GM12878 (cell line): ENCODE measurements at regions of chr21 and their contacts with region 1.

Region 1: GRCh38 chr21:36630485-36631206 is 68.3 kb upstream of the SIM2 start:
- DNase-seq: no peak
- ATAC-seq: peak; percentile 89
- H3K4me3 ChIP-seq: no peak overlapping the region
- H3K27ac ChIP-seq: no peak overlapping the region
- H3K4me1 ChIP-seq: no peaks in the 10 kb centered on the region
- H3K27me3 ChIP-seq: no peaks in the 10 kb centered on the region
- CTCF ChIP-seq: peak; percentile 59 to 78 (median 70)
- EP300 ChIP-seq: no peak
- POLR2A ChIP-seq: no peak
- RAD21 ChIP-seq: peak; percentile 61

Region 2: GRCh38 chr21:36589355-36589971 is 41.2 kb before region 1 on chr21:
- CTCF ChIA-PET with region 1: interaction called, 10 read pairs
- POLR2A ChIA-PET with region 1: no interaction called
- RAD21 ChIA-PET with region 1: no interaction called
- SMC1A ChIA-PET with region 1: interaction called, 3 read pairs
- in situ Hi-C with region 1: no loop called
- intact Hi-C with region 1: no loop called
- DNase-seq: peak; percentile 16
- ATAC-seq: peak; percentile 99
- H3K4me3 ChIP-seq: no peak overlapping the region
- H3K27ac ChIP-seq: no peak overlapping the region
- H3K4me1 ChIP-seq: no peaks in the 10 kb centered on the region; the same call in 1 of the 2 replicates
- H3K27me3 ChIP-seq: no peaks in the 10 kb centered on the region
- CTCF ChIP-seq: peak; percentile 66 to 69 (median 67)
- EP300 ChIP-seq: no peak
- POLR2A ChIP-seq: no peak
- RAD21 ChIP-seq: peak; percentile 77

Region 3: DNA sequence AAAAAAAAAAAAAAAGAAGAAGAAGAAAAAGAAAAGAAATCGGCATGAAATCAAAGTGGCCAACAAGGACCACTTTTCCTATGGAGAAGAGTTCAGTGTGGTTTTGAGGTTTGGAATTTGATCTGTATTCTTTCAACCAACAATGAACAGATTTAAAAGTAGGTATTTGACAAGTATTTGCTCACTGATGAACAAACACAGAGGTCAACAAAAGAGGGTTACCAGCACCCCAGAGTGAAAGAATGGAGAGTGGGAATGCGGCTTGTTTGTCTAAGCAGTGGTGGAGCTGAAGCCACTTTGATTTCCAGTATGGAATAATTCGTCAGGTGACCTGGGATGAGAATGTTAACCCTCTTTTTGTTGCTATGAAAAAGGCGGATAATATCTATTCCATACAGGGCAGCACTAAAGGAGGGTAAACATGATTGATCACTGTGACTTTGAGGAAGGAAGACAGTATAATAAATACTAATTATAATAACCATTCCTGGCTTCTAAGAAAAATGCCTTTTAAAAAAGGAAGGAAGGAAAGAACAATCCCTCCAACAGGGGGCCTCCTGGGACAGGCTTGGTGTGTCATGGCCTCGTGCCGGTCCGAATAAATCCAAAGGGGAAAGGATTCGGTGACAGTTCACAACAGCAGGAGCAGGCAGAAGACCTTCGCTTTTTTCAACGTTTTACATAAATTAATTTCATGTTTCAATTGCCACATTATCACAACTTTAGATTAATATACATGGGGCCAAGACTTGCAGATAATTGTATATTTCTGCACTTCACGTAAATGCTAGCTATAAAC is 31.1 kb after region 1 on chr21:
- CTCF ChIA-PET with region 1: interaction called, 13 read pairs
- POLR2A ChIA-PET with region 1: no interaction called
- RAD21 ChIA-PET with region 1: no interaction called
- SMC1A ChIA-PET with region 1: no interaction called
- in situ Hi-C with region 1: no loop called
- intact Hi-C with region 1: no loop called
- DNase-seq: no peak
- ATAC-seq: no peak
- H3K4me3 ChIP-seq: no peak overlapping the region
- H3K27ac ChIP-seq: no peak overlapping the region
- H3K4me1 ChIP-seq: no peaks in the 10 kb centered on the region
- H3K27me3 ChIP-seq: peaks cover 0 to 3% of the 10 kb centered on the region in 2 experiments; a peak in 1 of 4 replicates
- CTCF ChIP-seq: no peak
- EP300 ChIP-seq: no peak
- POLR2A ChIP-seq: no peak
- RAD21 ChIP-seq: no peak

Region 4: GRCh38 chr21:36917471-36918158 is 287.0 kb after region 1 on chr21:
- CTCF ChIA-PET with region 1: interaction called, 19 read pairs
- POLR2A ChIA-PET with region 1: no interaction called
- RAD21 ChIA-PET with region 1: no interaction called
- SMC1A ChIA-PET with region 1: interaction called, 3 read pairs
- in situ Hi-C with region 1: no loop called
- intact Hi-C with region 1: no loop called
- DNase-seq: no peak
- ATAC-seq: peak; percentile 22; the same call in 1 of the 3 replicates
- H3K4me3 ChIP-seq: no peak overlapping the region
- H3K27ac ChIP-seq: no peak overlapping the region
- H3K4me1 ChIP-seq: no peaks in the 10 kb centered on the region
- H3K27me3 ChIP-seq: no peaks in the 10 kb centered on the region
- CTCF ChIP-seq: peak; percentile 30 to 38 (median 37); a peak in 4 of 6 replicates
- EP300 ChIP-seq: no peak
- POLR2A ChIP-seq: no peak
- RAD21 ChIP-seq: peak; percentile 23; the same call in 1 of the 2 replicates